ENCODE measurements at regions of chr12 and their contacts with region 1.

Region 1: GRCh38 chr12:120944645-120945231 is 33.6 kb upstream of the HNF1A start:
- DNase-seq: peak in 1 of 2 experiments; percentile 49
- H3K4me3 ChIP-seq: no peak overlapping the region
- H3K27ac ChIP-seq: no peak overlapping the region
- H3K4me1 ChIP-seq: no peaks in the 10 kb centered on the region
- H3K27me3 ChIP-seq: no peaks in the 10 kb centered on the region
- CTCF ChIP-seq: peak; percentile 87

Region 2: GRCh38 chr12:120618954-120619615 is 325.7 kb before region 1 on chr12:
- CTCF ChIA-PET with region 1: interaction called, 12 read pairs
- POLR2A ChIA-PET with region 1: no interaction called
- intact Hi-C with region 1: no loop called
- DNase-seq: no peak
- H3K4me3 ChIP-seq: no peak overlapping the region
- H3K27ac ChIP-seq: no peak overlapping the region
- H3K4me1 ChIP-seq: peaks cover 21% of the 10 kb centered on the region
- H3K27me3 ChIP-seq: no peaks in the 10 kb centered on the region
- CTCF ChIP-seq: no peak

Region 3: GRCh38 chr12:120909633-120910298 is 35.0 kb before region 1 on chr12:
- CTCF ChIA-PET with region 1: interaction called, 9 read pairs
- POLR2A ChIA-PET with region 1: interaction called, 3 read pairs
- intact Hi-C with region 1: loop called (anchors 5 kb)
- DNase-seq: no peak
- H3K4me3 ChIP-seq: no peak overlapping the region
- H3K27ac ChIP-seq: no peak overlapping the region
- H3K4me1 ChIP-seq: peaks cover 13% of the 10 kb centered on the region
- H3K27me3 ChIP-seq: no peaks in the 10 kb centered on the region
- CTCF ChIP-seq: no peak

Measured in PC-9 (cell line).